Caco-2 (cell line): ENCODE measurements at regions of chr14 and their contacts with region 1.

Region 1: GRCh38 chr14:105527661-105528581 is 1.5 kb downstream of the TMEM121 start:
- DNase-seq: peak in 1 of 2 experiments; percentile 83
- H3K4me3 ChIP-seq: peak overlapping the region; percentile 31
- H3K4me3 Mint-ChIP-seq: peak overlapping the region; percentile 62
- H3K27ac Mint-ChIP-seq: no peak overlapping the region
- H3K4me1 ChIP-seq: peaks cover 12% of the 10 kb centered on the region
- H3K4me1 Mint-ChIP-seq: no peaks in the 10 kb centered on the region
- H3K27me3 ChIP-seq: no peaks in the 10 kb centered on the region
- H3K27me3 Mint-ChIP-seq: peaks cover 7% of the 10 kb centered on the region
- CTCF ChIP-seq: peak; percentile 74 to 76

Region 2: DNA sequence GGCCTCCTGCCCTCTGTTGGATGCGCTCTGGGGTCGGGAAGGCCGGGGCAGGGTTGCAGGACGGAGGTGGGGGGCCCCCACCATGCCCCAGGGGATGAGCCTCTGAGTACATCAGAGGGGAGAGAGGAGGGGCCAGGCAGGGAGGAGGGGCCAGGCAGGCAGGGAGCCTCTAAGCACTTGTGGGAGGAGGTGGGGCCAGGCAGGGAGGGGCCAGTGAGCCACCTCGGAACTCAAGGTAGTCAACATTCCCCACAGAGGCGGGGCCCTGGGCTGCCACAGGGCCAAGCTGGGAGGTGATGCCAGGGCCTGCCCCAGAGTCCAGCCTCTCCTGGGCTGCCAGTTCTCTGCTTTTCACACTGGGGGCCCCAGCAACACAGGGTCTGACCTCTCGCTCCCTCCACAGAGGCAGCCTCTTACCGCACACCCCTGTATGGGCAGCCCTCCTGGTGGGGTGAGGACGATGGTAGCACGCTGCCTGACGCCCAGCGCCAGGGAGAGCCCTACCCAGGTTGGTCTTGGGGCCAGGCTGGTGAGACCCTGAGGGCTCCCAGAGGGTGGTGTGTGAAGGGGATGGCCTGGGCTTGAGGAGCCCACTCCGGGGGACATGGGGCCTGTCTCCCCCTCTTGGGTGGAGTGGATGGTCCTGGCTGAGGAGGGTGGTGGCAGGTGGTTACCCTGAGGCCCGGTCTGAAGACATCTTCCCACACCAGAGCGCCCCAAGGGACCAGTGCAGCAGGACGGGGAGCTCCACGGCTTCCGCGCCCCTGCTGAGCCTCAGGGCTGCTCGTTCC is 645.4 kb before region 1 on chr14:
- CTCF ChIA-PET with region 1: no interaction called
- POLR2A ChIA-PET with region 1: no interaction called
- intact Hi-C with region 1: no loop called
- DNase-seq: peak; percentile 66 to 81
- H3K4me3 ChIP-seq: no peak overlapping the region
- H3K4me3 Mint-ChIP-seq: no peak overlapping the region
- H3K27ac Mint-ChIP-seq: no peak overlapping the region
- H3K4me1 ChIP-seq: peaks cover 4% of the 10 kb centered on the region; the same call in 1 of the 2 replicates
- H3K4me1 Mint-ChIP-seq: no peaks in the 10 kb centered on the region
- H3K27me3 ChIP-seq: no peaks in the 10 kb centered on the region
- H3K27me3 Mint-ChIP-seq: no peaks in the 10 kb centered on the region
- CTCF ChIP-seq: no peak

Region 3: GRCh38 chr14:105205673-105206208 is 322.2 kb before region 1 on chr14:
- CTCF ChIA-PET with region 1: no interaction called
- POLR2A ChIA-PET with region 1: no interaction called
- intact Hi-C with region 1: no loop called
- DNase-seq: no peak
- H3K4me3 ChIP-seq: no peak overlapping the region
- H3K4me3 Mint-ChIP-seq: no peak overlapping the region
- H3K27ac Mint-ChIP-seq: no peak overlapping the region
- H3K4me1 ChIP-seq: 0 out of 2 replicates have a peak, but pooled peaks cover 3% of the 10 kb centered on the region
- H3K4me1 Mint-ChIP-seq: no peaks in the 10 kb centered on the region
- H3K27me3 ChIP-seq: no peaks in the 10 kb centered on the region
- H3K27me3 Mint-ChIP-seq: no peaks in the 10 kb centered on the region
- CTCF ChIP-seq: no peak

Region 4: DNA sequence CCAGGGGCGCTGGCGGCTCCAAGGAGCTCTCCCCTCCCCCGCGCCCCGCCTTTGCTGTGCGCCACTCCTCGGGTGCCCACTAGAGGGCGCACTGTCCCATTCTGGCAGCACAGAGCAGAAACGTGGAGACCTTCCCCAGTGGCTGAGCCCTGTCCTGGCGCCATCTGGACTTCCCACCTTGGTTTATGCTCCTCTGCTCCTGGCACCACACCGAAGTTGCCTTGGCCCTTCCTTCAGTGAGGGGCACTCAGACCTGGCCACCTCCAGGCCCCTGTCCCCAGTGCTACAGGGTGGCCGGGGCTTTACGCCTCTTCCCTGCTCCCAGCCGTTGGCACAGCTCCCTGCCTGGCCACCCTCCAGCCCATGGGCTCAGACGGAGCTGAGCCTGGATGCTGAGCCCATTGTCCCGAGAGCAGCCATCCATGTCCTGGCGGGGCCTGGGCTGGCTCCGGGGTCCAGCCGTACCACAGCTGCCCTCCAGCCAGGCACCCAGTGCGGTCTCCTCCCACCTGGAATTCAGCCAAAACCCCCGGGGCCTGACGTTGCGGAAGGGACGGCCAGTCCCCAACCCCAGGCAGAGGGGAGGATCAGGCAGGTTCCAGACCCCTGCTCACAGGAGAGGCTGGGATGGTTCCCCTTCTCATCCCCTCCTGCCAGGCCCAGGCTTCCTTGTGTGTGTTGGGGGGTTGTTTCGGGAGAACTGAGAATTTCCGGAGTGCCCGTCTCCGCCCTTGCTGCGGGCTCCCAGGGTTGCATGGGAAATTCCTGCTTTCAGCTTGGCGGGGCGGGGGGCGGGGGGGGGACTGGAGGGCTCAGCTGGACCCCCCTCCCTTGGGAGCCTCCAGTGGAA is 46.7 kb before region 1 on chr14:
- CTCF ChIA-PET with region 1: interaction called, 10 read pairs
- POLR2A ChIA-PET with region 1: no interaction called
- intact Hi-C with region 1: no loop called
- DNase-seq: peak; percentile 85 to 95
- H3K4me3 ChIP-seq: peak overlapping the region; percentile 32
- H3K4me3 Mint-ChIP-seq: peak overlapping the region; percentile 78
- H3K27ac Mint-ChIP-seq: peak overlapping the region; percentile 96
- H3K4me1 ChIP-seq: peaks cover 27% of the 10 kb centered on the region
- H3K4me1 Mint-ChIP-seq: peaks cover 13% of the 10 kb centered on the region
- H3K27me3 ChIP-seq: no peaks in the 10 kb centered on the region; the same call in 1 of the 2 replicates
- H3K27me3 Mint-ChIP-seq: peaks cover 7% of the 10 kb centered on the region
- CTCF ChIP-seq: peak; percentile 92 to 96